ENCODE measurements at regions of chr10 and their contacts with region 1.

Region 1: DNA sequence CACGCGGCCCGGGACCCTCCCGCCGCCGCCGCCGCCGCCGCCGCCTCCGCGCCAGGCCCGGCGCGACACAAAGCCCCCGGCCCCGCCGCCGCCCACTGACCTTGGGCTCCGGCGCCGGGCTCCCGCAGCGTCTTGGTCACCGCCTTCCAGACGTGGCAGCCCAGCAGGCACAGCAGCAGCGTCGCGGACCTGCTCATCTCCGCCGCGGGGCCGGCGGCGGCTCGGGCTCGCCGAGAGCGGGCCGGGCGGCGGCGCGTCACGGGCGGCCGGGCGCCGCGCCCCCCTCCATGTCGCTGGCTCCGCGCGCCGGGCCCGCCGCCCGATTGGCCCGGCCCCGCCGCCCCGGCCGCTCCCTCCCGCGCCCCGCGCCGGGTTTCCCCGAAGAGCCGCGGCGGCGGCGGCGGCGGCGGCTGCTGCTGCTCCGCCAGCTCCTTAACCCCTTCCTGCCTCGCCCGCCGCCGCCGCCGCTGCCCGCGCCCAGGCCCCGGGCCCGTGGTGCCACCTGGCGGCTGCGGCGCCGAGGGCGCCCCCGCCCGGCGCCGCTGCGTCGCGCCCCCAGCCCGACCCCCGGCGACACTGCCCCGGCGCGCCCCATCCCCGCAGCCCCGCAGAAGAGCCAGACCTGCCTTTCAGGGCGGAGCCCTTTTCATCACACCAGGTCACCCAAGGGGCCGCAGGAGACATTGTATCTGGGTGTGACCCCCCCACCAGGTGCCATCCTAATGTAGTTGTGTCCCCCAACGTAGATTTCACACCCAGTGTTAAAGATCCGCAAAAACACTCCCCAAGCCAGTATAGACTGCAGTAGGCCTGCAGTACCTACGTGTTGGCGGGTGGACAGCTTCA is at the start of gene FAM171A1:
- DNase-seq: peak; percentile 72
- H3K4me3 ChIP-seq: peak within 1 kb of the TSS; percentile 83
- H3K27ac ChIP-seq: peak within 1 kb of the TSS; percentile 52
- H3K4me1 ChIP-seq: no peaks in the 10 kb centered on the region
- H3K27me3 ChIP-seq: no peaks in the 10 kb centered on the region
- CTCF ChIP-seq: no peak
- total RNA-seq, gene FAM171A1: 50.9 to 65.8 TPM

Region 2: GRCh38 chr10:15209827-15210509 is 161.1 kb before region 1 on chr10:
- intact Hi-C with region 1: loop called (anchors 2 kb)
- DNase-seq: peak; percentile 90
- H3K4me3 ChIP-seq: no peak overlapping the region
- H3K27ac ChIP-seq: no peak overlapping the region
- H3K4me1 ChIP-seq: no peaks in the 10 kb centered on the region
- H3K27me3 ChIP-seq: no peaks in the 10 kb centered on the region
- CTCF ChIP-seq: peak; percentile 87

Region 3: DNA sequence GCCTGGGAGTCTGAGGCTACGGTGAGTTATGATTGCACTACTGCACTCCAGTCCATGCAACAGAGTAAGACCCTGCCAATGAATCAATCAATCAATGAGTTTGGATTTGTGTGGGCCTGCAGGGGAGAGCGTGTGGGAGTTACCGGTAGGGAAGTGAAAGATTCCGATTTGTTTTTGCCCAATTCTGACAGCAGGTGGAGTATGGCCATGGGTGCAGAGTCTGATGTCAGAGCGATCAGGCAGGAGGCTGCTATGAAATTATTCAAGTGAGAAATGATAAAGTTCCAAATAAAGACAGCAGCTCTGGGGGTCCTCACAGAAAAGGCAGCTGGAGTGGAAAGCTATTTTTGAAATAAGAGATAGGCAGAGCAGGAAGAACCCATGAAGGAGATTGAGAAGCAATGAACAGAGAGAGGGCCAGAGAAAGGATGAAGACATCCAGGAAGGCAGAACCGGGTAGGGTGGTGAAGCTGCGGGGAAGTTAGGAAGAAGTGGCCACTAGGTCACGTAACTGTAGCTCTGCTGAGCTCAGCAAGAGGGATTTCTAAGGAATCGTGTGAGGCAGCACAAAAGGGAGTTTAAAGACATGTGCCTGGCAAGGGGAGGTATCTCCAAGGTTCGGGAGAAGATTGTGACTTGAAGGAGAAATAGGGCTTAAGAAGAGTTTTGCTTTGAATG is 108.9 kb before region 1 on chr10:
- intact Hi-C with region 1: loop called (anchors 2 kb)
- DNase-seq: peak; percentile 39
- H3K4me3 ChIP-seq: no peak overlapping the region
- H3K27ac ChIP-seq: no peak overlapping the region
- H3K4me1 ChIP-seq: no peaks in the 10 kb centered on the region
- H3K27me3 ChIP-seq: no peaks in the 10 kb centered on the region
- CTCF ChIP-seq: peak; percentile 27

Region 4: DNA sequence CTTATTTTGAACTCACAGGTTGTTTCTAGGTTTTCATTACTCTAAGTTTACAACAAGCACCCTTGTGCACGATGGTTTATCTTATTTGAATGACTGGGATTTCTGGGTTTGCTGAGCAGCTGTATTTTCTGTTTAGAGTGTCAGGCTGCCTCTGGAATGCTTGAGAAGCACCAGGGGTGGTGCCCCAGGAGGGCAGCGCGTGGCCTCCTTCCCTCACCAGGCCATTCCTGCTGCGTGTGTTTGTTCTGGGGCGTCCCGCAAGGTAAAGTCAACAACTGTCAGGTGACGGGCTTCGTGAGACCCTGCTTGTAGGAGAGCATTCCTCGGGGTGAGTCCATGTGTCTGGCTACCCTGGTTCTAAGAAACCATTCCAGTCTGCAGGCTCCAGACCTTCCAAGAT is 54.9 kb before region 1 on chr10:
- intact Hi-C with region 1: loop called (anchors 5 kb)
- DNase-seq: no peak
- H3K4me3 ChIP-seq: no peak overlapping the region
- H3K27ac ChIP-seq: no peak overlapping the region
- H3K4me1 ChIP-seq: no peaks in the 10 kb centered on the region
- H3K27me3 ChIP-seq: no peaks in the 10 kb centered on the region
- CTCF ChIP-seq: no peak